ENCODE measurements at regions of chr6 and their contacts with region 1.

Region 1: GRCh38 chr6:22880686-22881433 is 311.5 kb downstream of the HDGFL1 start:
- DNase-seq: peak; percentile 92
- H3K4me3 ChIP-seq: no peak overlapping the region
- H3K27ac ChIP-seq: peak overlapping the region; percentile 80
- H3K4me1 ChIP-seq: peaks cover 53% of the 10 kb centered on the region
- H3K27me3 ChIP-seq: no peaks in the 10 kb centered on the region
- CTCF ChIP-seq: no peak
- POLR2A ChIP-seq: no peak

Region 2: DNA sequence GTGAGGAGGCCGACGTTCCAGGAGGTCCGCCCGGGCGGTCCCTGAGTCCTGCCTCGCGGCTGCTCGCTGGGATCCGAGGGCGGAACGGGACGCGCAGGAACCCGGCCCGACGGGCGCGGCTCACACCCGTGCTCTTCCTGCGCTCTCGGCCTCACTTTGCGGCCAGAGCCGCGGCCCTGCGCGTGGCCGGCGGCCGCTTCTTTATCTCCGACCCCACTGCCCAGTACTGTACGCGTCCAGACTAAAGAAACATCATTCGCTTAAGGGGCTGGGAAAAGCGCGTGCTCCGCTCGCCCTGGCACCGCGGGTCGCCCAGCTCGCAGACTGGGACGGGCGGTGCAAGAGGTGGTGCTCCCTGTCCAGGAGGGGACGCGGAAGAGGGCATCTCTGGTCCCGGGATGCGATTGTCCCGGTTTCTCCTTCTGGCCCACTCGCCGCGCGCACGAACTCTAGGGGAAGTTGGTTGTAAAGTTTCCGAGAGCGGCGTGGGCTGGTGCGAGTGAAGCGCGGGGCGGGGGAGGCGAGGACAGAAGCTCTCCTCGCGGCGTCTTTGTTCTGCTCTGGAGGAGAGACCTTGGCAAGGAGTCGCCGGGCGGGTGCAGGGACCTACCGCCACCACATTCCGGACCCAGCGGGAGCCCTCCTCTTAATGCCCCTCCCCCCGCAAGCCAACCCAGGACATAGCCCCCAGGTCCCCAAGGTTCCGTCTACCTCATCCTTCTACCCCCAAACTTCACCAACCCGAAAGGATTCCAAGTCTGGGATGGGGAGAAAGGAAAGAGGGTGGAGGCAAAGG is 1216.3 kb before region 1 on chr6:
- CTCF ChIA-PET with region 1: no interaction called
- POLR2A ChIA-PET with region 1: no interaction called
- dilution Hi-C with region 1: no loop called
- intact Hi-C with region 1: loop called (anchors 5 kb)
- DNase-seq: peak; percentile 61
- H3K4me3 ChIP-seq: peak overlapping the region; percentile 47 to 59 (median 55)
- H3K27ac ChIP-seq: peak overlapping the region; percentile 22
- H3K4me1 ChIP-seq: peaks cover 24% of the 10 kb centered on the region
- H3K27me3 ChIP-seq: no peaks in the 10 kb centered on the region
- CTCF ChIP-seq: no peak
- POLR2A ChIP-seq: no peak

Region 3: DNA sequence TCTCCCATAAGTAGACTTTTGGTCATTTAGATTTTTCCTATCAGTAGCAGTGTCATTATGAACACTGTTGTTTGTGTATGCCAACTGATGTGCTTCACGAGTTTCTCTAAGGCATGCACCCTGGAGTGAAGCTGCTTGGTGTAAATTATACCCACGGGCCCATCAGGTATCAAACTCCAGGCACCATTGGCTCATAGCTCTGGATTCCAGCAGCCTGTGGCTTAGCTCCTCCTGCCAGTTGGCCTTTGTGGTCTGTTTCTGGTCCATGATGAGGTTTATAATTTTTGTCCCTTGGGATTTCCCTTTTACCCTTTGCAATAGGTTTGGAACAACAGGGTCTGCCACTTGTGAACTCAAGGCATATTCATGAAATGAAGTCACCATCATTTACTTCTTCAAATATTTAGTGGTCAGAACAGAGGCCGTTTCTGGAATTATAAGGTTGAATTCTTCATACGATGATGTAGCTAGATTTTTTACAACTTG is 934.5 kb before region 1 on chr6:
- CTCF ChIA-PET with region 1: no interaction called
- POLR2A ChIA-PET with region 1: no interaction called
- dilution Hi-C with region 1: no loop called
- intact Hi-C with region 1: loop called (anchors 5 kb)
- DNase-seq: no peak
- H3K4me3 ChIP-seq: no peak overlapping the region
- H3K27ac ChIP-seq: no peak overlapping the region
- H3K4me1 ChIP-seq: peaks cover 51% of the 10 kb centered on the region
- H3K27me3 ChIP-seq: no peaks in the 10 kb centered on the region
- CTCF ChIP-seq: no peak
- POLR2A ChIP-seq: no peak

Region 4: DNA sequence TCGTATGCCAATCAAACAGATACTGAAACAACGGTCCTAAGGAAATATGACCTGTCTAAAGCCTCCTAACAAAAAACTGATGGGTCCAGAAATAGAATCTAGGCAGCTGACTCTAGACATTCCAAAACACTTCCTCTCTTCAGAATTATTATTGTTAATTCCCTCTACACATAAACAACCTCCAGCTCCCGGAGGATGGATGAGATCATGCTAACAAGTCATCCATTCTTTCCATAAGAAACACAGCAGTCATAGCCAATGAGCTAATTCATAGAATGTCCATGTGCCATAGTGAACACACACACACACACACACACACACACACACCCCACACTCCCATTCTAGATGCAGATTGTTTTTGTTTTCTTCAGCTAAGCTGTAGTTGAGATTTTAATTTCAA is 267.2 kb before region 1 on chr6:
- CTCF ChIA-PET with region 1: no interaction called
- POLR2A ChIA-PET with region 1: no interaction called
- dilution Hi-C with region 1: no loop called
- intact Hi-C with region 1: loop called (anchors 2 kb)
- DNase-seq: peak; percentile 96
- H3K4me3 ChIP-seq: no peak overlapping the region
- H3K27ac ChIP-seq: peak overlapping the region; percentile 53
- H3K4me1 ChIP-seq: peaks cover 12% of the 10 kb centered on the region
- H3K27me3 ChIP-seq: no peaks in the 10 kb centered on the region
- CTCF ChIP-seq: no peak
- POLR2A ChIP-seq: no peak

Region 5: DNA sequence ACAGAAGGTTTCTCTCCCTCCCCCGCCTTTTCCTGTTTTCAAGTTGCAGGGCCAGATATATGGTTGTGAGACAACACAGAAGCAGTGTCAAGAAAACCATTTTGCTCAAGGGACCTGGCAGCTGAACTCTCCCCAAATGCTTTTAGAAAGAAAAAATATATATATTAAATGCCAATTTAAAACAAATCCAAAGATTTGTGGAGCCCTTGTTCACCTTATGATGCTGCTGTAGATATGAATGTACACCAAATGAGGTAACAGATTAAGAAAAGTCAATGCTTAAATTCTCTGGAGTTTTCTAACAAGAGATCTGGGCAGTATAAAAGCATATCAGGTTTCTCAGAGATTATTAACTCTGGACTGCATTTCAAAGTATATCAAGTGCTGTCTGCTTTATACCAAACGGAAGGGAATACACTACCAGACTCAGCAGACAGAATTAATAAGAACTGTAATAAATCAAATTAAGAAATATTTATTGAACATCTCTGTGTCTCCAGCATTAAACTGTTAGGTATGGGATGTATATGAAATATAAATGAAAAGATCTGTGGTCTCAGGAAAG is 46.0 kb after region 1 on chr6:
- CTCF ChIA-PET with region 1: no interaction called
- POLR2A ChIA-PET with region 1: no interaction called
- dilution Hi-C with region 1: no loop called
- intact Hi-C with region 1: loop called (anchors 2 kb)
- DNase-seq: peak; percentile 70
- H3K4me3 ChIP-seq: no peak overlapping the region
- H3K27ac ChIP-seq: no peak overlapping the region
- H3K4me1 ChIP-seq: peaks cover 21% of the 10 kb centered on the region
- H3K27me3 ChIP-seq: no peaks in the 10 kb centered on the region
- CTCF ChIP-seq: no peak
- POLR2A ChIP-seq: no peak